ENCODE measurements at regions of chr6 and their contacts with region 1.

Region 1: GRCh38 chr6:10733151-10733715 is 10.4 kb downstream of the TMEM14C start:
- DNase-seq: no peak
- H3K4me3 ChIP-seq: no peak overlapping the region
- H3K27me3 ChIP-seq: no peaks in the 10 kb centered on the region
- CTCF ChIP-seq: no peak

Region 2: DNA sequence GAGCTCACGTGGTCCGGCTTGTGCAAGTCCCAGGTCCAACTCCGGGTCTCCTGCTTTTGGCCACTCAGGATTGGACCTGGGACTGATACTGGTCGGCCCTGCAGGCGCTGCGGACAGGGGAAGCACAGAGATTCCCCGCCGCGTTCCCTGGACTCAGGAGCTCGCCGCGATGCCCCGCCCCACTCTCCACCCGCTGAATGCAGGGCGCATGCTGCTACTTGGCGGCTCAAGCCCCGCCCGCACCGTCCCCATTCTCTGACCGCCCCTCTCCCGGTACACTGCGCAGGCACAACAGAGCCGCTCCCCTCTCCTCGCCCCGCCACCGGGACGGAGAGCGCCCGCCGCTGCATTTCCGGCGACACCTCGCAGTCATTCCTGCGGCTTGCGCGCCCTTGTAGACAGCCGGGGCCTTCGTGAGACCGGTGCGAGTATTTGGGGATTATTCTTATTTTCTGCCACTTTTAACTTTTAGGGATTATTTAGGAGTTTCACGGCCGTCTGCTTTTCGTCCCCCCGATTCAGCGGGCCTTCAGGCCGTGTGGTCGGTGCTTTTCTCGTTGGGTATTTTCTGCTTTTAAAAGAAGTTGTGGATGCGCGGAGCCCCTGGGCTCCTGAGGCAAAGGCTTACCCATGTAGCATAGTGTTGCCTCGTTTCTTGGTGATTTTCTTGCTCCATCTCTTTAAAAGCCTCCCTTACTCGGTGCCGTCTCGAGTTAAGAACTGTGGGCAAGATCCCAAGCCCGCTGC is 10.2 kb before region 1 on chr6 and contains the start of gene TMEM14C:
- CTCF ChIA-PET with region 1: interaction called, 6 read pairs
- POLR2A ChIA-PET with region 1: interaction called, 15 read pairs
- DNase-seq: peak; percentile 94
- H3K4me3 ChIP-seq: peak within 1 kb of the TSS; percentile 61
- H3K27me3 ChIP-seq: no peaks in the 10 kb centered on the region
- CTCF ChIP-seq: no peak
- polyA plus RNA-seq, gene TMEM14C: 210 and 226 TPM in 2 replicates